Gastrocnemius medialis (tissue), 4 donors: ENCODE measurements at regions of chr7 and their contacts with region 1.

Region 1: GRCh38 chr7:184294-185264 is 7.8 kb upstream of the FAM20C start:
- DNase-seq: peak; percentile 65 to 72
- ATAC-seq: peak; percentile 68 to 78
- H3K4me3 ChIP-seq: peak overlapping the region in 1 of 4 donors; percentile 9
- H3K27ac ChIP-seq: peak overlapping the region; percentile 78 to 94 (median 82)
- H3K4me1 ChIP-seq: peaks cover 40 to 42% of the 10 kb centered on the region in 2 donors
- H3K27me3 ChIP-seq: no peaks in the 10 kb centered on the region
- CTCF ChIP-seq: no peak
- POLR2A ChIP-seq: peak in 1 of 2 donors; percentile 40

Region 2: DNA sequence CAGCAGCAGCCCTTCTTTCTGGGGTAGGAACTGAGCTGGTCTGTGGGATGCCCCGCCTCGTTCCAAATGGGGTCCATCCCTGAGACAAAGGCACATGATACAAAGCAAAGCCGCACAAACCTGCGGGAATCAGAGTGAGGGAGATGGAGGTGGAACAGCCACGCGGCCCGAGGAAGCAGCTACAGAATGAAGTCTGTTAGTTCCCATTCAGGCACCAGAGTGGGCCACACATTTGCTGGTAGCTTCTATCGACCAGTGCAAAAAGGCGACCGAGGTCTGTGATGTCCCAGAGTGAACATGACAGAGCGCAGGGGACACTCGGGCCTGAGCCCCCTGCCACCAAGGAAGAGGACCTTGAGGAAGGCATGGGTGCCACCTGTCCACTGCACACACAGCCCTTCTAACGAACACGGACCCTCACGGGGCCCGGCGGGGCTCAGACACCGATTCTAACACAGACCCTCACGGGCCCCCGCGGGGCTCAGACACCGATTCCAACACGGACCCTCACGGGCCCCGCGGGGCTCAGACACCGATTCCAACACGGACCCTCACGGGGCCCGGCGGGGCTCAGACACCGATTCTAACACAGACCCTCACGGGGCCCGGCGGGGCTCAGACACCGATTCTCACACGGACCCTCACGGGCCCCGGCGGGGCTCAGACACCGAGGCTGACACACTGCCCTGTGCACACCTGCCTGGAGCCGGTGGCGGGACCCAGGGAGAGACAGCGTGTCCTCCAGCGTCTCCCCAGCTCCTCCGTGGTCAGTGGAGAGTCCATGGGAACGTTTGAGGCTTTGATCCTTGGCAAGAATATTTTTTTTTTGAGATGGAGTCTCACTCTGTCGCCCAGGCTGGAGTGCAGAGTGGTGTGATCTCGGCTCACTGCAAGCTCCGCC is 25.0 kb before region 1 on chr7:
- in situ Hi-C with region 1: no loop called
- intact Hi-C with region 1: loop called (anchors 2 kb)
- DNase-seq: no peak
- ATAC-seq: no peak
- H3K4me3 ChIP-seq: peak overlapping the region in 1 of 4 donors; percentile 9
- H3K27ac ChIP-seq: no peak overlapping the region
- H3K4me1 ChIP-seq: peaks cover 7 to 9% of the 10 kb centered on the region in 2 donors
- H3K27me3 ChIP-seq: no peaks in the 10 kb centered on the region
- CTCF ChIP-seq: no peak
- POLR2A ChIP-seq: no peak